ENCODE measurements at regions of chr15 and their contacts with region 1.

Region 1: GRCh38 chr15:29449136-29449535 is 179.5 kb upstream of the NSMCE3 start:
- ATAC-seq: peak in 1 of 8 experiments; percentile 37
- H3K4me3 ChIP-seq: no peak overlapping the region
- H3K27ac ChIP-seq: no peak overlapping the region
- H3K4me1 ChIP-seq: peaks cover 24 to 32% of the 10 kb centered on the region in 2 donors

Region 2: GRCh38 chr15:29538044-29538443 is 88.9 kb after region 1 on chr15:
- in situ Hi-C with region 1: loop called in 1 of 9 experiments (anchors 25 kb)
- ATAC-seq: peak in 6 of 8 experiments; percentile 27 to 87 (median 82)
- H3K4me3 ChIP-seq: no peak overlapping the region
- H3K27ac ChIP-seq: no peak overlapping the region
- H3K4me1 ChIP-seq: peaks cover 20 to 38% of the 10 kb centered on the region in 2 donors

Region 3: DNA sequence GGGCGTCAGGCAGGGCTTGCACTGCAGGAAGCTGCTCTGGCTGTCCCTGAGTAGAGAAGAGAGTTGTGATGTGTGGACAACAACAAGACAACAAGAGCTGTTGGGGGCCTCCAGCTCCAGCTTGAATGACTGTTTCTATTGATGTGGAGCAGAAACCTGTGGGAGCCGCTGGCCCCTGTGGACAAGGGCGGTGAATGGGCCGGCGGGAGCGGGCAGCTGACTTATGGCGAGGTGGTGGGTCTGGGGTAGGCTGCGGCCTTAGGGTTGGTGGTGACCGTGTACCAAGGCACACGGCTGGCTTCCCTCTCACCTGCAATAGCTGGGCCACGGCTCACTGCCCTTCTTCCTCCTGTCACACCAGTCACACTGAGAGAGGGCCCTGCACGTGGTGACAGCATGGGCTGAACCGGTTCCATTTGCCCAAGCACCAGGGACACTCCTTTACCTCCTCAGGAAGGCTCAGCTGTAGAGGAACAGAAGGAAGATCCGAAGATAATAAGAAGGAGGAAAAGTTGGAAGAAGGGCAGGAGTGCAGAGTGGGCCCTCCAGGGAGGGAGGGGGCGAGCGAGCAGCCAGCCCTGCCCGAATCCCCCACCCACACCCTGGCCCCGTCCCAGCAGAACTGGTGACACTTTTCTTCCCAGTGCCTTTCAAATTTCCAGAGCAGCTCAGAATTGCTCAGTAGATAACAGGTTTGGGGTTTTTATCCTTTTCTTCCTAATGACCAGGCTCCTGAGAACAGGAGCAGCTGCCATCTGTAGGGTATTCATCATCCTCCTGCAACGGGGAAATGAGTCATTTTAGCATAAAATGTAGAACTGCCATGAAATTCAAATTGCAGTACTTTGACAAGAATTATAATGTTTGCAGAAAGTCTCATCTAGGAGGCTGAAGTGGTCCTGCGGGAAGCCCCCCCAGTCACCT is 236.3 kb after region 1 on chr15:
- in situ Hi-C with region 1: no loop called
- ATAC-seq: peak; percentile 13 to 74 (median 66)
- H3K4me3 ChIP-seq: no peak overlapping the region
- H3K27ac ChIP-seq: peak overlapping the region in 1 of 2 donors; percentile 9
- H3K4me1 ChIP-seq: peaks cover 9 to 31% of the 10 kb centered on the region in 2 donors